ENCODE measurements at regions of chr17 and their contacts with region 1.

Region 1: GRCh38 chr17:4553669-4554068 is 1.5 kb downstream of the MYBBP1A start:
- DNase-seq: no peak
- H3K4me3 Mint-ChIP-seq: peak overlapping the region; percentile 89
- H3K27ac Mint-ChIP-seq: peak overlapping the region; percentile 84
- H3K4me1 Mint-ChIP-seq: peaks cover 30% of the 10 kb centered on the region
- H3K27me3 Mint-ChIP-seq: no peaks in the 10 kb centered on the region

Region 2: GRCh38 chr17:4540224-4540641 is 13.4 kb before region 1 on chr17:
- CTCF ChIA-PET with region 1: no interaction called
- POLR2A ChIA-PET with region 1: no interaction called
- DNase-seq: no peak
- H3K4me3 Mint-ChIP-seq: no peak overlapping the region
- H3K27ac Mint-ChIP-seq: no peak overlapping the region
- H3K4me1 Mint-ChIP-seq: no peaks in the 10 kb centered on the region
- H3K27me3 Mint-ChIP-seq: no peaks in the 10 kb centered on the region

Region 3: DNA sequence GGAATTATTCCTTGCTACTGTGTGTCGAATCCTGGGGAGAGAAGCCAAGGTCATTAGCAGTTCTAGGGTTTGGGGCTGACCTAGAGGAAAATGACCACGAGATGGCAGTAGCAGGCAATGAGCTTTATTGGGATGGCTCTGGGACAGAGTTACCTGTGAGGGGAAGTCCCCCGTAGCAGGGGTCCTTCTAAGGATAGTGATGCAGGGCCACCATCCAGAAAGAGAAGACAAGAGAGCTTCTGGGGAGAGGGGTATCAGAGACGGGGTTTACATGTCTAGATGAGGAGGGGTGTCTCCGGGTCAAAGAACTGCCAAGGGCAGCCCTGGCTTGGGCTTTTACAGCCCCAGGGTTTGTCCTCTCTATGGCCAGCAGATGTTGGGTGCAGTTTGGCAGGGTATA is 13.1 kb after region 1 on chr17:
- CTCF ChIA-PET with region 1: interaction called, 10 read pairs
- POLR2A ChIA-PET with region 1: no interaction called
- DNase-seq: peak; percentile 61
- H3K4me3 Mint-ChIP-seq: no peak overlapping the region
- H3K27ac Mint-ChIP-seq: no peak overlapping the region
- H3K4me1 Mint-ChIP-seq: peaks cover 32% of the 10 kb centered on the region
- H3K27me3 Mint-ChIP-seq: peaks cover 4% of the 10 kb centered on the region